ENCODE measurements at regions of chrX and their contacts with region 1.

Region 1: DNA sequence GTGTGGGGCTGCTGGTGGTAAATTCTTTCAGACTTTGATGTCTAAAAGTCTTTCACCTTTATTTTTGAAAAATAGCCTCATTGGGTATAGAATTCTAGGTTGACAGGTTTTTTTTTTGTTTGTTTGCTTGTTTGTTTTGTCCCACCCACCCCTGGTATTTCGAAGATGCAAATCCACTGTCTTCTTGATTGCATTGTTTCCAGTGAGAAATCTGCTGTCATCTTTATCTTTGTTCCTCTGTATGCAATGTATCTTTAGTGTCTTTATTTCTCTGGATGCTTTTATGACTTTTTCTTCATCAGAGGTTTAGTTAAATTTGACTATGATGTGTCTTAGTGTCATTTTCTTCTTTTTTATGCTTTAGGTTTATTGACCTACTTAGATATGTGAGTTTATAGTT is 21.3 kb upstream of the HCCS start:
- DNase-seq: no peak

Region 2: GRCh38 chrX:11137543-11138139 is 47.8 kb after region 1 on chrX:
- intact Hi-C with region 1: loop called in 1 of 2 experiments (anchors 2 kb)
- DNase-seq: no peak

Measured in posterior vena cava (tissue), 2 donors.